Activated naive CD4-positive, alpha-beta T cell treated with anti-CD3 and anti-CD28 coated beads, Interleukin-2, amount 10 ng/mL, durations not matched to agents 7 days and 5 days (primary cell): ENCODE measurements at regions of chr14 and their contacts with region 1.

Region 1: DNA sequence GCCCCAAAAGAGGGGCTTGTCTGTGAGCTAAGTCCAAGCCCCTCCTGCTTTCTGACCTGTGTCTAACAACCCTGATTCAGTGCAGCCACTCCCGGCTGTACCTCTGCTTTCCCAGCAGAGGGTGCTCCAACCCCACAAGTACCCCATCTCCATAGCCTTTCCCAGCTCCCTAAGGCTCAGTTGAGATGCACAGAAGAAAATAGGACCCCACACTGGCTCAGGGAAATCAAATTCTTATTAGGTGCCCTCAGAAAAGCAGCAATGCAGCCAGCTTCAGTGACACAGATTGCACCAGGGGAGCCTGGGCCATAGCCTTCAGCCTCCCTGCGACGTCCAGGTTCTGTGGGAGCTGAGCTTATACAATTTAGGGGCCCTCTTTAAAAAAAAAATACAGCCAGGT is 49.9 kb downstream of the LRRC74A start:
- DNase-seq: peak; percentile 63
- H3K4me3 Mint-ChIP-seq: no peak overlapping the region
- H3K27ac Mint-ChIP-seq: no peak overlapping the region
- H3K4me1 Mint-ChIP-seq: no peaks in the 10 kb centered on the region
- H3K27me3 Mint-ChIP-seq: peaks cover 37% of the 10 kb centered on the region

Region 2: DNA sequence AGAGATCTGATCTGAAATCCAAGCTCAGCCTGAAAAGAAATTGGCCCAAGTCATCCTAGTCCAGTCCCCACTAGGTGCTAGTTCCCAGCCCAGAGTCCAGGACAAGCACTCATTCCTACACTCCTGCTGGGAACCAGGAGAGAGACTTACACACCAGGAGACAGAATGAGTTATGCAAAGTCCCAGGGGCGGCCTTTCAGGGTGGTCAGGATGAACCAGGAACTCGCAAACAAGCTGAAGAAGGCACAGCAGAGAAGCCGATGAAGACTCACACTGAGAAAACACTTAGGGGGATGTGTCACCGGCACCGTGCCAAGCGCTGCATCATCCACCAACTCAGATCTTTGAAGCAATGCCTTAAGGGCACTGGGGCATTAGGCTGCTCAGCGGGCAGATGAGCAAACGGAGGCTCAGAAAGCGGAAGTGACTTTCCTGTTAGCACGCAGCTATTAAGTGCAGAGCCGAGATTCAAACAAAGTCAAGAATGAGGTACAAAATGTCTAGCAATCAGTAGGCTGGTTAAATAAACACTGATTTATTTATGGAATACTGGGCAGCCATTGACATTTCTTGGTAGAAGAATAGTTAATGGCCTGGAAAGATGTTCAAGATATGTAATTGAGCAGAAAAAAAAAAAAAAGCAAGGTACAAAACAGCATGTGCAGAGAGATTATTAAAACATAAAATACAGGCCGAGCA is 28.8 kb after region 1 on chr14:
- CTCF ChIA-PET with region 1: interaction called, 97 read pairs
- DNase-seq: peak; percentile 67
- H3K4me3 Mint-ChIP-seq: no peak overlapping the region
- H3K27ac Mint-ChIP-seq: peak overlapping the region; percentile 53
- H3K4me1 Mint-ChIP-seq: peaks cover 42% of the 10 kb centered on the region
- H3K27me3 Mint-ChIP-seq: peaks cover 33% of the 10 kb centered on the region

Region 3: DNA sequence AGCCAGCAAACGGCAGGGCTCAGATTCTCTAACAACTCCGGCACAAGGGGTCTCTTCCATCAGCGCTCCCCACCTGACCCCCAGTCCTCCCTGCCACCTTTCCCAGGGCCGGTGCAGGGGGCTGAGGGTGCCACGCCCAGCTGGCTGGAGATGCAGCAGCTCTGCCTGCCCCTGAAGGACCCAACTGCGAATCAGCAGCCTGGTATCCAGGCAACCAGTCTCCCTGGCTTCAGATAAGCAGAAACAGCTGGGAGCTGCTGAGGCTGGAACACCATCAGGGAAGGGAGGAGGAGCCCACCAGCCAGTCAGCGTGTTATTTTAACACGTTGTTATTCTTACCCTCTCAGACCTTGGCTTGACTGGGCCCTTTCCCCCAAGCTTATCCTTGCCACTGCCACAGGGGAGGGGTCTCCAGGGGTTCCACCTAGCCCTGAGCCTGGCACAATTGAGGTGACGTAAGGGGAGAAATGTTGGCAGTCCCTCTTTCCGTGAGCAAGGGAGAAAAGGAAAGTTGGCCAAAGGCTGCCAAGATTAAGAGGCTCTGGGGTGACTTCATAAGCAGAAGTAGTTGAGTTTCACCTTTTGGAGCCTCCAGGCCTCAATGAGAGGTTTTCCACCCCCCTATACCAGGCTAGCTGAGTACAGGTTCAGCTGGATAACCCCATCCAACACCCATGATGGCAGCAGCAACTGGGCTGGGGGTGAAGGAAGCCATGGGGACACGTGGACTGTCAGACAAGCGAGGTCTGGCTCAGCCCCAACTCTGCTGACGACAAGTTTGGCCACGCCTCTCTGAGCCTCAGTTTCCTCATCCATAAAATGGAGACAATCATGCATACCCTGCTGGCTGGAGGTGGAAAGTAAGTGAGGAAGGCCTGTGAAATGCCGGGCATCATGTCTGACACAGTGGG is 61.4 kb after region 1 on chr14:
- CTCF ChIA-PET with region 1: interaction called, 12 read pairs
- DNase-seq: no peak
- H3K4me3 Mint-ChIP-seq: no peak overlapping the region
- H3K27ac Mint-ChIP-seq: no peak overlapping the region
- H3K4me1 Mint-ChIP-seq: peaks cover 25% of the 10 kb centered on the region
- H3K27me3 Mint-ChIP-seq: peaks cover 21% of the 10 kb centered on the region

Region 4: DNA sequence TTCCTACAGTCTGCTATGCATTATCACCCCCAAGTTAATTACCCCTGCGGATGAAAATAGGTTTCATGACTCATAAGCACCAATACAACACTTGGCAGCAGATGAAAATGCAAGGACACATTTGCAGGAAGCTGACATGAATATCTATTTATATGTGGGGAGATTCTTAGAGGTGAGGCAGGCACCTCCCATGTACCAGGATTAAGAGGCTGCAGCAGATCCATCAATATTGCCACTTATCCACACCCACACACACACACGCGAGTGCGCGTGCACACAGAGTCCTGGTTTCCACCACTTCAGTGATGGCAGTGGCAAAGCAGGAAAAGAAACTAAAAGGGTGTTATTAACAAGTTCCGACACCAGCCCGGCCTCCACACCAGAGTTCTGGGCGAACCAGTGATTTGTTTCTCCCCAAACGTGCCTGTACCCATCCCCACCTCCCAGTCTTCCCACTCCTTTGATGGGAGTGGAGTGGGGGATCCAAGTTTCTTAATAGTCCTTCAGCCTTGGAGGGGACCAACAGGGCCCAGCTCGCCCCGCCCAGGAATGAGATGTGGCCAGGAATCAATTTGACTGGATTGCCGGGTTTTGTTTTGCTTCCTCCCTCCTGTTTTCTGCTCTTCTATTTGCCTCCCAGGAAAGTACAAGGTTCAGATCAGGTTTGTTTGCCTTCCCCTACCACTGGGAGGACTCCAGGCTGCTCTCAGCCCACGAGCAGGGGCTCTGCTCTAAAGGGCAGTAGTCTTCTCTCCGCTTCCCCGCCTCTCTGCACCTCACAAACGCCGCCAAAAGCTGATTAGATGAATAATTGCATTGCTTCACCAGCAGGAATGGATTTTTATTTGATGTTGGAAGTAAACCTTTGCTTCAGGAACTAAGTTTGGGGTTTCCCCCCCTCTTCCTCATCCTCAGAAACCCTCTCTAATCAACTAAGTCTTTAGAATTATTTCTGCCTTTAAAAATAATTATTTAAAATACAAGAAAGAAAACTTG is 147.2 kb after region 1 on chr14:
- CTCF ChIA-PET with region 1: interaction called, 11 read pairs
- DNase-seq: no peak
- H3K4me3 Mint-ChIP-seq: peak overlapping the region; percentile 2
- H3K27ac Mint-ChIP-seq: peak overlapping the region; percentile 77
- H3K4me1 Mint-ChIP-seq: peaks cover 52% of the 10 kb centered on the region
- H3K27me3 Mint-ChIP-seq: peaks cover 4% of the 10 kb centered on the region

Region 5: GRCh38 chr14:77097700-77098528 is 221.8 kb after region 1 on chr14 and contains the start of gene CIPC:
- CTCF ChIA-PET with region 1: interaction called, 1,049 read pairs
- DNase-seq: peak; percentile 100
- H3K4me3 Mint-ChIP-seq: peak within 1 kb of the TSS; percentile 99
- H3K27ac Mint-ChIP-seq: peak within 1 kb of the TSS; percentile 97
- H3K4me1 Mint-ChIP-seq: peaks cover 34% of the 10 kb centered on the region
- H3K27me3 Mint-ChIP-seq: peaks cover 6% of the 10 kb centered on the region

Region 6: GRCh38 chr14:77124345-77125280 is 248.5 kb after region 1 on chr14:
- CTCF ChIA-PET with region 1: interaction called, 22 read pairs
- DNase-seq: peak; percentile 73
- H3K4me3 Mint-ChIP-seq: peak overlapping the region; percentile 74
- H3K27ac Mint-ChIP-seq: peak overlapping the region; percentile 83
- H3K4me1 Mint-ChIP-seq: peaks cover 54% of the 10 kb centered on the region
- H3K27me3 Mint-ChIP-seq: peaks cover 59% of the 10 kb centered on the region